ENCODE measurements at regions of chr7 and their contacts with region 1.

Region 1: GRCh38 chr7:44438816-44439215 is 51.6 kb downstream of the NUDCD3 start:
- DNase-seq: no peak
- H3K4me3 Mint-ChIP-seq: no peak overlapping the region
- H3K27ac Mint-ChIP-seq: no peak overlapping the region
- H3K4me1 Mint-ChIP-seq: peaks cover 63% of the 10 kb centered on the region
- H3K27me3 Mint-ChIP-seq: no peaks in the 10 kb centered on the region

Region 2: DNA sequence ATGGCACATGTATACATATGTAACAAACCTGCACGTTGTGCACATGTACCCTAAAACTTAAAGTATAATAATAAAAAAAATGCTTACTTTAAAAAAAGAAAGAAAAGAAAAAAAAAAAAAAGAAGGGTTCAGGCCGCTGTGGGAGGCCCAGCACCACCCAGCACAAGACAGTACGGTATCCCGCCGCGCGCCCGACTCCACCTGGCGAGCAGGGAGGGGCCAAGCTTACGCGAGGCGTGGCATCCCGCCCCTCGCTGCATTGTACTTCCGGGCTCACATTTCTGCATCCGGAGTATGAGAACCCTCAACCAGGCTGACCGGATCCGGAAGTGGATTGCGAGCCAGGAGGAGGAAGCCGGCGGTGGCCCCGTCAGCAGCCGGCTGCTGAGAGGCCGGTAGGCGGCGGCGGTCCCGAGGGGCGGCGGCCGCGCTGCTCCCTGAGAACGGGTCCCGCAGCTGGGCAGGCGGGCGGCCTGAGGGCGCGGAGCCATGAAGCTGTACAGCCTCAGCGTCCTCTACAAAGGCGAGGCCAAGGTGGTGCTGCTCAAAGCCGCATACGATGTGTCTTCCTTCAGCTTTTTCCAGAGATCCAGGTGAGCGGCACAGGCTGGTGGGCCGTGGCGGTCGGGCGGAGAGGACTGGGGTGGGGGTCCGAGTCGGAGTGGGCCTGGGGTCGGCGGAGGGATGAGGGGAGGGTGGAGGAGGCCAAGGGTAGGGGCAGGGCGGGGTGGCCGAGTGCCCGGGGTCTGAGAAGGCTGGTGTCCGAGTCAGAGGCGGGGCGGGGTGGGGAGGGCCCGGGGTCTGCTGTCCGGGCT is 238.0 kb before region 1 on chr7 and contains the start of gene YKT6:
- CTCF ChIA-PET with region 1: no interaction called
- POLR2A ChIA-PET with region 1: no interaction called
- intact Hi-C with region 1: no loop called
- DNase-seq: peak; percentile 97
- H3K4me3 Mint-ChIP-seq: peak within 1 kb of the TSS; percentile 83
- H3K27ac Mint-ChIP-seq: peak within 1 kb of the TSS; percentile 23
- H3K4me1 Mint-ChIP-seq: peaks cover 28% of the 10 kb centered on the region
- H3K27me3 Mint-ChIP-seq: peaks cover 9% of the 10 kb centered on the region
- total RNA-seq, gene YKT6: 57.0 to 60.4 TPM

Region 3: GRCh38 chr7:44460325-44460724 is 21.5 kb after region 1 on chr7:
- CTCF ChIA-PET with region 1: no interaction called
- POLR2A ChIA-PET with region 1: no interaction called
- intact Hi-C with region 1: loop called (anchors 2 kb)
- DNase-seq: peak; percentile 74
- H3K4me3 Mint-ChIP-seq: peak overlapping the region; percentile 34
- H3K27ac Mint-ChIP-seq: peak overlapping the region; percentile 64
- H3K4me1 Mint-ChIP-seq: peaks cover 70% of the 10 kb centered on the region
- H3K27me3 Mint-ChIP-seq: no peaks in the 10 kb centered on the region

Region 4: GRCh38 chr7:44581879-44582603 is 143.2 kb after region 1 on chr7 and contains the start of gene TMED4:
- CTCF ChIA-PET with region 1: no interaction called
- POLR2A ChIA-PET with region 1: no interaction called
- intact Hi-C with region 1: no loop called
- DNase-seq: peak; percentile 100
- H3K4me3 Mint-ChIP-seq: peak within 1 kb of the TSS; percentile 91
- H3K27ac Mint-ChIP-seq: peak within 1 kb of the TSS; percentile 91
- H3K4me1 Mint-ChIP-seq: peaks cover 29% of the 10 kb centered on the region
- H3K27me3 Mint-ChIP-seq: peaks cover 3% of the 10 kb centered on the region
- total RNA-seq, gene TMED4: 74.8 to 79.1 TPM